HEK293T (cell line): ENCODE measurements at regions of chr5 and their contacts with region 1.

Region 1: GRCh38 chr5:83911367-83911919 is 190.8 kb upstream of the HAPLN1 start:
- DNase-seq: no peak

Region 2: DNA sequence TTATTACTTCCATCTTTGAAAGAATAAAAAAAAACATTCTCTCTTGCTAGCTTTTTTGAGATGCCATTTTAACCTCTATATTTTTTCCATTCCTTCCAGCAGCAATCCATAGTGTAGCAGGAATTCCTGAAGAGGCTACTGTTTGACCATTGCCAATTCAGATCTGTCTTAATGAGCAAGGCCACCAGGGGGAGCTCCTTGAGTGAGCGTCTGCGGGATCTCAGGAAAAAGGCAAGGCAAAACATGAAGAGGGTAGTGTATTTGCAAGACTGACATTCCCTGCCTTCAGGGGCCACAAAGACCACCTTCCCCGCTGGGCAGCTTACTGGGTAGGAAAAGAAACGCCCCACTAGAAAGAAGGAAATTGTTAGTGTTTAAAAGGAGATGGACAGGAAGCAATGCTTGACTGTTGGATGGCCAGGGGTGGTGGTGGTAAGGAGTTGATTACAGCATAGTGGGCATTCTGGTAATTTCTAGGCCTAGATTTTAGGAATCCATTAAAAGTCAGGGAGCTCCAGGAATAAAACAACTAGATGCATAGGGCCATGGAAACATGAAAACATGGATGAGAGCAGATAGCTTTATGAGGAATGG is 15.8 kb after region 1 on chr5:
- CTCF ChIA-PET with region 1: interaction called, 16 read pairs
- POLR2A ChIA-PET with region 1: no interaction called
- DNase-seq: peak; percentile 61